ENCODE measurements at regions of chr15 and their contacts with region 1.

Region 1: GRCh38 chr15:70833897-70834765 is 19.8 kb downstream of the LARP6 start:
- DNase-seq: no peak

Region 2: DNA sequence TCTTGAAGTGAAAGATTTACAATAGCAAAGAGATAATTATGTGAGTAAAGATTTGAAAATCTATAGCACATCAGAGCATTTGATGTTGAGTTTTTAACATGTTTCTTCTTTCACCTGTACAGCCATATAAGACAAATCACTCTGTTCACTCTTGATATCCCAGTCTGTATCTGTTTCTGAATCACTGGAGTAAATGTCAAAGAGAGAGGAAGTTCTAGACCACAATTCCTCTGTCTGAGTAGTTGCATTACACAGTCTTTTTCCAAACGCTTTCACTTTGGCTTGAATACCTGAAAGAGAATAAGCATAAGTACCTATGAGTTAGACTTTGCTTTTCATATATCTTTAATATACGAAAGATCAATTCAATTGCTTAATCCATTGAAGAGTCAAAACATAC is 48.2 kb after region 1 on chr15:
- intact Hi-C with region 1: loop called (anchors 5 kb)
- DNase-seq: no peak